ENCODE measurements at regions of chr17 and their contacts with region 1.

Region 1: GRCh38 chr17:49997791-49998703 is 3.0 kb upstream of the DLX3 start:
- DNase-seq: peak; percentile 71
- H3K4me3 ChIP-seq: no peak overlapping the region
- CTCF ChIP-seq: peak; percentile 85

Region 2: GRCh38 chr17:49910094-49910857 is 87.8 kb before region 1 on chr17:
- in situ Hi-C with region 1: loop called (anchors 10 kb)
- DNase-seq: no peak
- H3K4me3 ChIP-seq: no peak overlapping the region
- CTCF ChIP-seq: no peak

Region 3: GRCh38 chr17:50101346-50102163 is 103.5 kb after region 1 on chr17:
- in situ Hi-C with region 1: no loop called
- DNase-seq: no peak
- H3K4me3 ChIP-seq: no peak overlapping the region
- CTCF ChIP-seq: no peak

Region 4: DNA sequence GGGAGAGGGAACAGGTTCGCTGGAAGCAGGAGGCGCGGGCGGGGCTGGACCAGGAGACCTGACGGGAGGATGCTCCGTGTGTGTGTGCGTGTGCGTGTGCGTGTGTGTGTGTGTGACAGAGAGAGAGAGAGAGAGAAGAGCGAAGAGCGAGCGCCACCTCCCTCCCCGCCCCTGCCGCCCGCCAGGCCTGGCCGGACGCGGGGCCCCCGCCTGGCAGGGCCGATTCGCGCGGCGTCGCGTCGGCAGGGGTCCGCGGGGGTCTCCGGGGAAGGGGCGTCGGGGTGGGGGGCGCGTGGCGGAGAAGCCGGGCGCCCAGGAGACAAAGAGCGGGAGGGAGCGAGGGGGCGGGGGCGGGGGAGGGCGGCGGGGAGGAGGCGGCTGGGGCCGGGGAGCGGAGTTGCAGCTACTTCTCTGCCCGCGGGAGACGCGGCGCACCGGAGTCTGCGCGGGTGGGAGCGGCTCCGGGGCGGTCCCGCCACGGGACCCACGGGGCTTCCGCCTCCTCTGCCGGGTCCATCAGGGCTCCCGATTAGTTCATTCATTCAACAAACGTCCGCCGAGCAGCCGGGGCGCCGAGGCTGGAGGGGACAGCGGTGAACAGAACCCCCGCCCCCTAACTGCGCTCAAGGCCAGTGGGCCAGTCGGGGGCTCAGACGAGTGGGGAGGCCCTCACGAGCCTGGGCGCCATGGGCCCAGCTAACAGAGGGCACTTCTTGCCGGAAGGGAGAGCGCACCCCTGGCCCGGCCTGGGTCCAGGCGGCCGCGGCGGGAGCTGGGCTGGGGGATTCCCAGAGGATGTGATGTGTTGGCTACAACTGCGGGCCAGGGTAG is 131.9 kb after region 1 on chr17 and contains the start of gene SAMD14:
- in situ Hi-C with region 1: no loop called
- DNase-seq: peak; percentile 26
- H3K4me3 ChIP-seq: peak within 1 kb of the TSS; percentile 52
- CTCF ChIP-seq: no peak